ENCODE measurements at regions of chr13 and their contacts with region 1.

Region 1: GRCh38 chr13:50951366-50951765 is 41.8 kb downstream of the RNASEH2B start:
- DNase-seq: no peak
- H3K4me3 ChIP-seq: no peak overlapping the region
- H3K27ac ChIP-seq: no peak overlapping the region
- H3K4me1 ChIP-seq: no peaks in the 10 kb centered on the region
- H3K27me3 ChIP-seq: no peaks in the 10 kb centered on the region
- CTCF ChIP-seq: no peak

Region 2: GRCh38 chr13:51000571-51001260 is 49.4 kb after region 1 on chr13:
- CTCF ChIA-PET with region 1: interaction called, 11 read pairs
- POLR2A ChIA-PET with region 1: no interaction called
- intact Hi-C with region 1: no loop called
- DNase-seq: peak; percentile 12
- H3K4me3 ChIP-seq: no peak overlapping the region
- H3K27ac ChIP-seq: no peak overlapping the region
- H3K4me1 ChIP-seq: peaks cover 19% of the 10 kb centered on the region
- H3K27me3 ChIP-seq: no peaks in the 10 kb centered on the region
- CTCF ChIP-seq: no peak

Measured in A673 (cell line).